ENCODE measurements at regions of chr17 and their contacts with region 1.

Region 1: GRCh38 chr17:82418001-82418986 is at the starts of genes HEXD and OGFOD3:
- DNase-seq: peak; percentile 79 to 85
- ATAC-seq: peak; percentile 82 to 96 (median 94)
- H3K4me3 ChIP-seq: peak within 1 kb of the TSS; percentile 29 to 98 (median 79)
- H3K27ac ChIP-seq: peak within 1 kb of the TSS; percentile 68 to 96 (median 92)
- H3K4me1 ChIP-seq: peaks cover 3 to 30% (median 18%) of the 10 kb centered on the region in 9 donors
- H3K27me3 ChIP-seq: no peaks in the 10 kb centered on the region
- CTCF ChIP-seq: no peak
- total RNA-seq, gene HEXD: 9.4 to 22.2 (median 12.8) TPM
- total RNA-seq, gene OGFOD3: 23.3 to 39.4 (median 31.1) TPM

Region 2: DNA sequence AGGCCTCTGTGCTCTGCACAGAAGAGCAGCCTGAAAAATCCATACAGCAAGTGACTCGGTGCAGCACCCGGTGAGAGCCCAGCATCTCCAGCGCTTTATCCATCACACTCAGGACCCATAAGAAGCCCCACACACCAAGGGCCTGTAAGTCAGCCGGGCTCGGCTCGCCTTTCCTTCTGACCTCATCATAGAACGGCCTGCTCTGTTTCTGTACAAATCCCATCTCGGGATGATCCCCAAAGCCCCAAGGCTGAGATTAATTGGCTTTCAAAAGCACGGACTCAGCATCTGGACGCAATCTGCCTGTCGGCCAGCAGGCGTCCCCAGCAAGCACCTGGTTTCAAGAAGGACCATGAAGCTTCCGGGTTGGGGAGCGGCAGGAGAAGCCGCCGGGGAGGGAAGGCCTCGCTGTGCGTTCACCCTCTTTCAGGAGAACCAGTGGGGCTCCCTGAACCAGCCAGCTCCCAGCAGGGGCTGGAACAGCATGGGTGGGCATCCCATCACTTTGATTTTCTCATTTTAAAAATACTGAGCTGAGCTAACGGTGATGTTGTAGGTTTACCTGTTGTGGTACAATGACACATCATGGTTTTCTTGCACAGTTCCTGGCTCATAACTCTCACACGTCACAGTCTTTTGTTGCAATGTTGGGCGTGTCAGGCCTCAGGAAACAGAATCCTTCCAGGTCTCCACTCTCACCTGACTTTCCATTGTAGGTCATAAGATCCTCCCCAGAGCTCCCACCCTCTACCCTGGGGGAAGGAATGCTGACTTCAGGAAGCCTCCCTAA is 212.4 kb before region 1 on chr17:
- intact Hi-C with region 1: loop called in 2 of 10 experiments (anchors 10 kb)
- DNase-seq: peak; percentile 80 to 81
- ATAC-seq: peak; percentile 68 to 90 (median 86)
- H3K4me3 ChIP-seq: peak overlapping the region in 6 of 10 donors; percentile 3 to 27 (median 13)
- H3K27ac ChIP-seq: peak overlapping the region in 8 of 10 donors; percentile 48 to 84 (median 72)
- H3K4me1 ChIP-seq: peaks cover 0 to 27% (median 11%) of the 10 kb centered on the region in 9 donors
- H3K27me3 ChIP-seq: no peaks in the 10 kb centered on the region
- CTCF ChIP-seq: peak; percentile 80 to 98 (median 92)

Region 3: GRCh38 chr17:82450170-82451106 is 32.1 kb after region 1 on chr17 and contains the start of gene CYBC1:
- intact Hi-C with region 1: loop called in 3 of 10 experiments (anchors 5 kb)
- DNase-seq: peak; percentile 92 to 94
- ATAC-seq: peak; percentile 93 to 97 (median 96)
- H3K4me3 ChIP-seq: peak within 1 kb of the TSS; percentile 66 to 99 (median 90)
- H3K27ac ChIP-seq: peak within 1 kb of the TSS; percentile 79 to 99 (median 93)
- H3K4me1 ChIP-seq: peaks cover 6 to 46% (median 32%) of the 10 kb centered on the region in 9 donors
- H3K27me3 ChIP-seq: no peaks in the 10 kb centered on the region
- CTCF ChIP-seq: no peak
- total RNA-seq, gene CYBC1: 13.4 to 56.6 (median 20.5) TPM

Region 4: DNA sequence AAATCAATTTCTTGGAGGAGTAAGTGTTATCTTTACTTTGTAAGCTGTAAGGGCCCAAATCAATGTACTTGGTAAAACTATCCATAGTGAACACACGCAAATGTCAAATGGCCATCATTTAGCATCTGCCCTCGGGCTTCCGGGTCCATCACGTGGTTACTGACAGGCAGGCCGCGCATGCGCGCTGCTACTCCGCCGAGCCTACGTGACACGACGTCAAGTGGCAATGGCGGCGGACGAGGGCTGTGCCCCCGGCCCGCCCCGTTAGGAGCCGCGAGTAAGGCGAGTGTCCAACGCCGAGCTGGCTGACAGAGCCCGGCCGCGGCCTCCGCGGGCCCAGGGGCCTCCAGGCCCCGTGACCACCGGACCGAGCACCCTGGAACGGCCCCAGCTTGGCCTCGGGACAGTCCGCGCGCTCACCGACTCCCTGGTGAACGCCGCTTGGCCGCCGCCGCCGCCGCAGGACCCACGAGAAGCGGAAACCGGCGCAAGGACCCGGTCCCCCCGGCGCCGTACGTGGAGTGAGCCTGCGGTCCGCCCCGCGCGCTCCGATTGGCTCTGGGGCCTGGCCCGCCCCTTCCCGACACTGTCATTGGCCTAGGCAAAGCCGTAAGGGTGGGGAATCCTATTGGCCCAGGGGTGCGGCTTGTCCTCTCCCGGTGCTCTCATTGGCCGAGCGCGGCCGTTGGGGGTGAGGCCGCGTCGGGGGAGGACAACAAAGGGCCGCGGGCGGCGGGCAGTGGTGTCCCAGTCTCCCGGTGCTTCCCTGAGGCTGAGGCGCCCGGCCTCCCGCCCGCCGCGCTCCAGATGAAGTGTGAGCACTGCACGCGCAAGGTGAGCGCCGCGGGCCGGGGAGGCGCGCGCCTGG is 39.9 kb after region 1 on chr17 and contains the start of gene NARF:
- intact Hi-C with region 1: loop called in 3 of 10 experiments (anchors 5 kb)
- DNase-seq: peak; percentile 97 to 98
- ATAC-seq: peak; percentile 99
- H3K4me3 ChIP-seq: peak within 1 kb of the TSS; percentile 69 to 99 (median 88)
- H3K27ac ChIP-seq: peak within 1 kb of the TSS; percentile 99 to 100 (median 100)
- H3K4me1 ChIP-seq: peaks cover 10 to 38% (median 32%) of the 10 kb centered on the region in 9 donors
- H3K27me3 ChIP-seq: no peaks in the 10 kb centered on the region
- CTCF ChIP-seq: no peak
- total RNA-seq, gene NARF: 48.4 to 74.8 (median 60.4) TPM

Measured in heart right ventricle (tissue), 16 donors.